Aorta (tissue), 5 donors: ENCODE measurements at regions of chr9 and their contacts with region 1.

Region 1: DNA sequence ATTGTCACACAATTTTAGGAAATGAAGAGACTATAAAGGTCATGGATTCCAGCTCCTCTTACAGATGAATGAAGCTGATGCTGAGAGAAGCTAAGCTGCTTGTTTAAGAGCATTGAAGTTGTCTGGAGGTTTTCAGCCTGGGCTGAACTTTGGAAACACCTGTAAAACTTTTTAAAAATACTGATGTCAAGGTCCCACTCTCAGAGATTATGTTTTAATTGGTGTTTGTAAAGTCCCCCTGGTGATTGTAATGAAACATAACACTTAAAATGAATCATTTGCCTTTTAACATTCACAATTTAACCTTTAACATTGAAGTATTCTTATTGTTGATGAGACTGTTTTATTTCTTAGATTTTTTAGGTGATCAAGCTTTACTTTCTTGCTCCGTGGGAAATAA is 16.4 kb downstream of the RAD23B start:
- DNase-seq: no peak
- ATAC-seq: no peak
- H3K4me3 ChIP-seq: no peak overlapping the region
- H3K27ac ChIP-seq: no peak overlapping the region
- H3K4me1 ChIP-seq: peaks cover 0 to 3% of the 10 kb centered on the region in 2 donors
- H3K27me3 ChIP-seq: no peaks in the 10 kb centered on the region

Region 2: DNA sequence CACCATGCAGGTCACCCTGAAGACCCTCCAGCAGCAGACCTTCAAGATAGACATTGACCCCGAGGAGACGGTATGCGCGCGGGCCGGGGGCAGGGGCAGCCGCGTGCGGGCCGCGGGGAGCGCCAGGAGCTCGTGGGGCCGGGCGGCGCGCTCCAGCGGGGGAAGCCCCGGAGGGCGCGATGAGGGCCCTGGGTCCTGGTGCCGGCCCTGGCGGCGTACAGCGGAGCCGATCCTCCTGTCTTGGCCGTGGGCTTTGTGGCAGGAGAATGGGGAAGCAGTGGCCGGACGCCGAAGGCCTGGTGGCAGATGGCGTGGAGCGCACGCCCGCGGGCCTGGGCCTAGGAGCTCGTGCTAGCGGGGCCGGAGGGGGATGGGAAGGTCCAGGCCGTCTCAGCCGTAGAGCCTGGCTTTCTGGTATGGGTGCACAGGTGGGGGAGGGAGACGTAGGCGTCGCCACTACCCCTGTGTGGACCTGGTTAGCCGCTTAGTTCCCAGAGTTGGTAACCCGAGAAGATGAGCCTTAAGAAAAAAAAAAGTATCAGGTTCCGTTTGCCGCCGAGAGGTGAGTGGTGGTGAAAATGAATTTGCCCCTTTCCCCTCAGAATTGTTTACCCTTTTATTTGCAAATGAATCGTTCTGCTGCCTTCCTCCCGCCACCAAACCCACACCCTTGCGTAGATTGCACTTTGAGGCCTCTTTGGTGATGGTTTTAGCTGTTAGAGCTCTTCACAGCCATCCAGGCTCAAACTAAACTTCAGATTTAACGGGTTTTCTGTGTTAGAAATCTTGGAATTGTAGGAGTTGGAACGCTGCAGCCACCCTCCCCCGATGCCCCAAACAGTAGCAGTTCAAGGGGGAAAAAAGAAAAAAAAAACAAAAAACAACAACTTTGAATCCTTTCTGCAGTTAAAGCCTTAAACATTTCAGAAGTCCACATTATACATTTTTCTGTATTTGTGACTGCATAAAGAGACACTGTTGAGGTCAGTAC is 15.5 kb before region 1 on chr9:
- intact Hi-C with region 1: loop called in 1 of 2 experiments (anchors 2 kb)
- DNase-seq: peak; percentile 83 to 90
- ATAC-seq: peak; percentile 60
- H3K4me3 ChIP-seq: peak overlapping the region; percentile 76 to 95
- H3K27ac ChIP-seq: peak overlapping the region; percentile 32 to 98
- H3K4me1 ChIP-seq: no peaks in the 10 kb centered on the region
- H3K27me3 ChIP-seq: no peaks in the 10 kb centered on the region